Mammary epithelial cell (primary cell): ENCODE measurements at regions of chr17 and their contacts with region 1.

Region 1: DNA sequence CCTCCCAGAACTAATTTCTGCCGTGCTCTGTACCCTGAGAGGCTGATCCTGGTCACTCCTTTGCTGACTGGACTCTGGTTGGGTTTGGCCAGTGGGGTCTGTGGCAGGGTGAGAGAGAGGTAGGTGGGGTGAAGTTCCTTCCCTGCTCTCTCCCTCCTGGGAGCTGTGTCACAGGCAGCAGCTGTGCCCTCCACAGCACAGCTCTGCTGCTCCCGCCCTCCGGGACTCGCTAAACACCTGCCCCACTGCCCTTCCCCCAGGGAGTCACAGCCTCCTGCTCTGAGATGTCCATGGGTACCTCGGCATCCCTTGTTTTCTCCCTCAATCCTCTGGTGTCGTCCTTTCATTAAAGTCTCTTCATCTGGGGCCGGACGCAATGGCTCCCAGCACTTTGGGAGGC is 66.4 kb downstream of the SRCIN1 start:
- DNase-seq: no peak
- H3K4me3 ChIP-seq: no peak overlapping the region
- H3K27ac ChIP-seq: no peak overlapping the region
- H3K4me1 ChIP-seq: no peaks in the 10 kb centered on the region
- H3K27me3 ChIP-seq: no peaks in the 10 kb centered on the region
- CTCF ChIP-seq: no peak

Region 2: GRCh38 chr17:38428112-38428642 is 111.2 kb before region 1 on chr17 and contains the start of gene ARHGAP23:
- CTCF ChIA-PET with region 1: interaction called, 3 read pairs
- dilution Hi-C with region 1: no loop called
- in situ Hi-C with region 1: no loop called
- intact Hi-C with region 1: loop called (anchors 1 kb)
- DNase-seq: peak; percentile 24
- H3K4me3 ChIP-seq: peak within 1 kb of the TSS; percentile 68 to 73 (median 71)
- H3K27ac ChIP-seq: no peak within 1 kb of the TSS
- H3K4me1 ChIP-seq: peaks cover 20% of the 10 kb centered on the region
- H3K27me3 ChIP-seq: no peaks in the 10 kb centered on the region
- CTCF ChIP-seq: no peak
- total RNA-seq, gene ARHGAP23: 30.5 to 43.0 TPM

Region 3: GRCh38 chr17:38557836-38558727 is 18.7 kb after region 1 on chr17:
- CTCF ChIA-PET with region 1: no interaction called
- dilution Hi-C with region 1: no loop called
- in situ Hi-C with region 1: no loop called
- intact Hi-C with region 1: no loop called
- DNase-seq: peak; percentile 95
- H3K4me3 ChIP-seq: peak overlapping the region; percentile 41 to 53 (median 48)
- H3K27ac ChIP-seq: peak overlapping the region; percentile 8
- H3K4me1 ChIP-seq: peaks cover 58% of the 10 kb centered on the region
- H3K27me3 ChIP-seq: no peaks in the 10 kb centered on the region
- CTCF ChIP-seq: peak; percentile 87 to 98